Heart left ventricle (tissue), 16 donors: ENCODE measurements at regions of chr20 and their contacts with region 1.

Region 1: GRCh38 chr20:50929299-50930138 is 1.7 kb downstream of the ADNP start:
- DNase-seq: peak; percentile 86 to 92 (median 89)
- ATAC-seq: peak; percentile 71 to 79 (median 74)
- H3K4me3 ChIP-seq: peak overlapping the region; percentile 71 to 92 (median 78)
- H3K27ac ChIP-seq: peak overlapping the region in 11 of 12 donors; percentile 63 to 99 (median 79)
- H3K4me1 ChIP-seq: peaks cover 0 to 62% (median 37%) of the 10 kb centered on the region in 12 donors
- H3K27me3 ChIP-seq: no peaks in the 10 kb centered on the region
- CTCF ChIP-seq: peak; percentile 69 to 92 (median 80)
- POLR2A ChIP-seq: no peak

Region 2: DNA sequence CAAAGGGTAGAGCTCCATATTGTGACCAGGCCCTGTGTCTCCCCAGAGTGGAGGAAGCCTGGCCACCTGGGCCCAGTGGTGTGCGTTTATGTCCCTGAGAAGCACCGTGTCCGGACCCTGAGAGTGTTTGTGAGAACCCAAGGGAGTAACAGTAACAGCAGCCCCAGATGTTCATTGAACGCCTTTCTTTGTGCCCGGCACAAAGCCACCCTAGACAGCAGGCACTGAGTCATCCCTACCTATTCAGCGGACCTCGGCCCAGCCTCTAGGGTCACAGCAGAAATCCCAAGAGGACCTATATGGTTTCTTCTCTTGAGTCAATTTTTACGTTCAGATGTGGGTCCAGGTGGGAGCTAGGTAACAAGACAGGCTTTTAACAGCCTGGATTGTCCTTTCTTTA is 110.2 kb before region 1 on chr20:
- intact Hi-C with region 1: loop called in 2 of 10 experiments (anchors 1 to 2 kb)
- DNase-seq: no peak
- ATAC-seq: no peak
- H3K4me3 ChIP-seq: no peak overlapping the region
- H3K27ac ChIP-seq: no peak overlapping the region
- H3K4me1 ChIP-seq: peaks cover 0 to 7% (median 0%) of the 10 kb centered on the region in 12 donors
- H3K27me3 ChIP-seq: no peaks in the 10 kb centered on the region
- CTCF ChIP-seq: no peak
- POLR2A ChIP-seq: no peak

Region 3: GRCh38 chr20:50958615-50959542 is 29.4 kb after region 1 on chr20 and contains the start of gene MOCS3:
- intact Hi-C with region 1: loop called in 3 of 10 experiments (anchors 1 to 2 kb)
- DNase-seq: peak; percentile 83 to 87 (median 86)
- ATAC-seq: peak; percentile 68 to 88 (median 84)
- H3K4me3 ChIP-seq: peak within 1 kb of the TSS; percentile 70 to 97 (median 92)
- H3K27ac ChIP-seq: peak within 1 kb of the TSS; percentile 86 to 98 (median 92)
- H3K4me1 ChIP-seq: peaks cover 5 to 58% (median 45%) of the 10 kb centered on the region in 12 donors
- H3K27me3 ChIP-seq: no peaks in the 10 kb centered on the region
- CTCF ChIP-seq: peak in 2 of 12 donors; percentile 20 to 24
- POLR2A ChIP-seq: peak in 1 of 2 donors; percentile 1
- total RNA-seq, gene MOCS3: 2.6 to 3.9 (median 2.8) TPM